ENCODE measurements at regions of chr9 and their contacts with region 1.

Region 1: GRCh38 chr9:19999491-20000057 is 210.7 kb upstream of the SLC24A2 start:
- DNase-seq: peak; percentile 55
- H3K4me3 Mint-ChIP-seq: no peak overlapping the region
- H3K27ac Mint-ChIP-seq: peak overlapping the region; percentile 91
- H3K4me1 Mint-ChIP-seq: peaks cover 51% of the 10 kb centered on the region
- H3K27me3 Mint-ChIP-seq: no peaks in the 10 kb centered on the region

Region 2: DNA sequence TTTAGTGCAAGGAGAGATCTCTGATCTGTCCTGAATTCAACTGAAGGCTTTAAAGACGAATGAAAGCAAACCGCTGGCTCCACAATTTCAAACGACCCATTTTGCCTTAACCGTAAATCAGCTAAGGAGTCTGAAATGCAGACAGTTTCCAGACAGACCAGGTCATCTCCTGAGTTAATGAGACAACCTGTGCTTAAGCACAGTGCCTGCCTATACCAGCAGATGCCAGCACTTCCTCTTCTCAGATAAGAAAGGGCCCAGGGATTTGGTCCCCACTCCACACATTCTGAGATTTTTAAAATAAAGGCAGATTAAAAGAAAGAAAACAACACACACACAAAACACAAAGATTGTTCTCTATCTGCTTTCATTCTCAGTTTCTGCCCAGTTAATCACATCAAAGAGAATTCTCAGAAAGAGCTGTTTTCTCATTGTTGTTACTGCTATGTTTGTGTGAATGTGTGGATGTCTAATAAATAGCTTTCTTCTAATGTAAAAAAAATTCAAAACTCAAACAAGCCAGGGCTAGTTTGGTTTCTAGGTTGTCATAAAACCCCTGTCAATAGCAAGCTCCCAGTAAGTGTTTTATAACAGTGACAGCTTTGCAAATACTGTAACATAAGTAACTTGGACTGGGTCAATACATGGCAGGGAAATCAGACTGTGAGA is 53.0 kb before region 1 on chr9:
- intact Hi-C with region 1: loop called (anchors 5 kb)
- DNase-seq: no peak
- H3K4me3 Mint-ChIP-seq: no peak overlapping the region
- H3K27ac Mint-ChIP-seq: no peak overlapping the region
- H3K4me1 Mint-ChIP-seq: peaks cover 4% of the 10 kb centered on the region
- H3K27me3 Mint-ChIP-seq: peaks cover 24% of the 10 kb centered on the region

Region 3: DNA sequence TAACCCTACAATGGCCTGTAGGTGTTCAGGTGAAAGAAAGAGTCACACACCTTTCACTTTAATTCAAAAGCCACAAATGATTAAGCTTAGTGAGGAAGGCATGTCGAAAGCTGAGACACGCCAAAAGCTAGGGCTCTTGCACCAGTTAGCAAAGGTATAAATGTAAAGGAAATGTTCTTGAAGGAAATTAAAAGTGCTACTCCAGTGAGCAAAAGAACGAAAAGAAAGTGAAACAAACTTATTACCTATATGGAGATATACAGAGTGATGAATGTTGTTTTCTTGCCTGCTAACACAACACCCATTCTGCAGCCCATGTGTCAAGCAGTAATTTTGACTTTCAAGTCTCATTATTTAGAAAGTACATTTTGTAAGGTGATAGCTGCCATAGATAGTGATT is 43.5 kb after region 1 on chr9:
- intact Hi-C with region 1: loop called (anchors 5 kb)
- DNase-seq: no peak
- H3K4me3 Mint-ChIP-seq: peak overlapping the region; percentile 71
- H3K27ac Mint-ChIP-seq: peak overlapping the region; percentile 70
- H3K4me1 Mint-ChIP-seq: peaks cover 30% of the 10 kb centered on the region
- H3K27me3 Mint-ChIP-seq: peaks cover 2% of the 10 kb centered on the region

Region 4: GRCh38 chr9:20684035-20684872 is 684.7 kb after region 1 on chr9 and contains the start of gene FOCAD:
- intact Hi-C with region 1: loop called (anchors 5 kb)
- DNase-seq: peak; percentile 96
- H3K4me3 Mint-ChIP-seq: peak within 1 kb of the TSS; percentile 87
- H3K27ac Mint-ChIP-seq: peak within 1 kb of the TSS; percentile 82
- H3K4me1 Mint-ChIP-seq: peaks cover 21% of the 10 kb centered on the region
- H3K27me3 Mint-ChIP-seq: no peaks in the 10 kb centered on the region
- total RNA-seq, gene FOCAD: 32.2 and 36.0 TPM in 2 replicates

Region 5: DNA sequence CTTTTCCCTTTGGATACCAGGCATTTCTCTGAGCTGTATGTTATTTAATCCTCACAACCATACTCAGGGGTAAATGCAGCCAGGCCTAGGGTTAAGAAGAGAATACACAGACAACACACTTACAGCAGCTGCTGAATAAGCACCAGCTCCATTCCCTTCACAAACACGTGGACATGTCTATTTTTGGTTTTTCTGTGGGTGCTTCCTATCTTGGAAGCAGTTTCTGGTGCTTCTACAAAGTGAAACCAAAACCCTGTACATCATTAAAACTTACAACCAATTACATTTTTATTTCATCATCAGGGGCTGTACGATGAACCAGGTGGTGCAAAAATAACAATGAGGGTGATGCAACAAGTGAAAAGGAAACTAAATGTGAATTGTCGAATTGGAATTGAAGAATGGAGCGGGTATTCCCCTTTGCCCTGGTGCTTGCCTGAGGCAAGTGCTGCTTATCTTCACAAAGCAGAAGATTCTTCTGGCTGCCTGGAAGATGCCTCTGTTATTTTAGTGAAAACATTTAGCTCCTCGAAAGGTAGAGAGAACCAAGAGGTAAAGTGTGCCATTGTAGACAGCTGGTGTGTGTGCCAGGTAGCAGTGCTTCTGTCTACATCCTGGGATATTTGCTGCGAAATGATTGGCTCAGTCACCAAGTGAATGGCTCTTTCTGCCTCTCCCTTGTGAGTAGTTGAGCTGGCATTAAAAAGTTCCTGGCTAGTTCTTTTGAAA is 1096.8 kb after region 1 on chr9:
- intact Hi-C with region 1: loop called (anchors 5 kb)
- DNase-seq: peak; percentile 34
- H3K4me3 Mint-ChIP-seq: peak overlapping the region; percentile 51
- H3K27ac Mint-ChIP-seq: peak overlapping the region; percentile 8
- H3K4me1 Mint-ChIP-seq: peaks cover 33% of the 10 kb centered on the region
- H3K27me3 Mint-ChIP-seq: no peaks in the 10 kb centered on the region

Measured in activated T-helper 2 cell treated with anti-CD3 and anti-CD28 coated beads, Interferon-gamma antibody, Interleukin-2, Interleukin-4, amounts not matched to agents 10 μg/mL and 5 μg/mL and 100 μg/mL, durations not matched to agents 14 hours and 24 hours and 36 hours (primary cell).